H1 (cell line): ENCODE measurements at regions of chr11 and their contacts with region 1.

Region 1: DNA sequence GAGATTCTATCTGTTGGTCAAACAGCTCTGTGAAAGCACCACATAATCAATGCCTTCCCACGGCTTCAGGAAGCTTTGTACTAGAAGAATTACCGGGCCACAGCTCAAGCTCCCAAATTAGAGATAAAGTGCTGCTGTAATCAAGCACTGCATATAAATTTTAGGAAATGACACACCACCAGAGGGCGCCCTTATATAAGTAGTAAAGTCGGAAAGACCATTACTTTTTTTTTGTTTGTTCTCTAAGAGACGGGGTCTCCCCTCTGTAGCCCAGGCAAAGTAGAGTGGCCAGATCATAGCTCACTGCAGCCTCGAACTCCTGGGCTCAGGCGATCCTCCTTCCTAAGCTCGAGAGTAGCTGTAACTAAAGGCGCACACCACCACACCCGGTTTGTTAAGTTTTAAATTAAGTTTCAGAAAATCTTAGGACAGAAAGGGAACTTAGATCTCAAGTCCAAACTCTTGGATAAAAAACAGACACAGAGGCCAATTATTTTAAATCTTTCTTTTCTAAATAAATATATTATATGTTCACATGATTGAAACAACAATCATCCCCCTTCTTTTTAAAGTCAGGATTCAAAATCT is 32.6 kb downstream of the PRCP start:
- DNase-seq: peak; percentile 9 to 83
- H3K4me3 ChIP-seq: no peak overlapping the region
- H3K27ac ChIP-seq: no peak overlapping the region
- H3K4me1 ChIP-seq: peaks cover 0 to 3% (median 0%) of the 10 kb centered on the region in 4 experiments; a peak in 1 of 7 replicates
- H3K27me3 ChIP-seq: no peaks in the 10 kb centered on the region
- CTCF ChIP-seq: peak in 2 of 3 experiments; percentile 58 to 66; a peak in 3 of 4 replicates
- EP300 ChIP-seq: no peak
- POLR2A ChIP-seq: no peak
- RAD21 ChIP-seq: peak; percentile 75 to 84

Region 2: GRCh38 chr11:82653752-82654151 is 213.8 kb before region 1 on chr11:
- CTCF ChIA-PET with region 1: no interaction called
- POLR2A ChIA-PET with region 1: no interaction called
- DNase-seq: no peak
- H3K4me3 ChIP-seq: no peak overlapping the region
- H3K27ac ChIP-seq: no peak overlapping the region
- H3K4me1 ChIP-seq: no peaks in the 10 kb centered on the region
- H3K27me3 ChIP-seq: no peaks in the 10 kb centered on the region
- CTCF ChIP-seq: no peak
- EP300 ChIP-seq: no peak
- POLR2A ChIP-seq: no peak
- RAD21 ChIP-seq: no peak

Region 3: DNA sequence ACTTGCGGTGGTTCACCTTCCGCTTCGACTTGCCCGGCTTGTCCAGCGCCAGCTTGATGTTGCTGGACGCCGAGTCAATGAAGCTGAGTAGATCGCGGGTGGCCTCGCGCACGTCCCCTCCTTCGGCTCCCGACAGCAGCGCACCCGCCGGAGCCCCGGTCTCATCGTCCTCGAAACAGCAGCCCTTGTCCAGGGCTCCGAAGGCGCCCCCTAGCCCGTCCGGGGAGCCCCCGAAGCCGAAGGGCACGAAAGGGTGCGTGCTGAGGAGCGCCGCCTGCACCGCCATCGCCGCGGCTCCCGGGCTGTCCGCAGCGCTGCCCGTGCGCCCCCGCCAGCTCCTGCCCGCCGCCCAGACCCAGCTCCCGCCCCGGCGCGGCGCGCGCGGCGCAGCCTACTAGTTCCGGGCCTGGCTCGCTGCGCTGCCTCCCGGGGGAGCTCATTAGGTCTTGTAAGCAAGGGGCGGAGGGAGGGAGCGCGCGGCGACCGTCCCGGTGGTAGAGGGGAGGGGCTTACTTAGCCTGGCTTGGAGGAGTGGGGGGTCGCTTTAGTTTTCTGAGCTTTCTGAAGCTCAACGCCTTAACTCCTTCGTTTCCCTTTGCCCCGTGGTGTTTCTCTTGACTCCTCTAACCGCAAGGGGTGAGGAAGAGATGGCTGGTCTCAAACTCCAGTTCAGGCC is 134.0 kb before region 1 on chr11 and contains the start of gene FAM181B:
- CTCF ChIA-PET with region 1: interaction called, 12 read pairs
- POLR2A ChIA-PET with region 1: no interaction called
- DNase-seq: peak; percentile 71 to 85
- H3K4me3 ChIP-seq: peak within 1 kb of the TSS; percentile 50 to 86 (median 58)
- H3K27ac ChIP-seq: no peak within 1 kb of the TSS
- H3K4me1 ChIP-seq: peaks cover 2 to 15% (median 6%) of the 10 kb centered on the region in 4 experiments; a peak in 5 of 7 replicates
- H3K27me3 ChIP-seq: peaks cover 11 to 41% (median 36%) of the 10 kb centered on the region in 4 experiments
- CTCF ChIP-seq: no peak
- EP300 ChIP-seq: 0 out of 3 replicates have a peak, but pooled peaks of 1 of the 2 experiments have one; percentile 24
- POLR2A ChIP-seq: no peak
- RAD21 ChIP-seq: no peak
- total RNA-seq, gene FAM181B: 0.37 and 0.42 TPM in 2 replicates

Region 4: DNA sequence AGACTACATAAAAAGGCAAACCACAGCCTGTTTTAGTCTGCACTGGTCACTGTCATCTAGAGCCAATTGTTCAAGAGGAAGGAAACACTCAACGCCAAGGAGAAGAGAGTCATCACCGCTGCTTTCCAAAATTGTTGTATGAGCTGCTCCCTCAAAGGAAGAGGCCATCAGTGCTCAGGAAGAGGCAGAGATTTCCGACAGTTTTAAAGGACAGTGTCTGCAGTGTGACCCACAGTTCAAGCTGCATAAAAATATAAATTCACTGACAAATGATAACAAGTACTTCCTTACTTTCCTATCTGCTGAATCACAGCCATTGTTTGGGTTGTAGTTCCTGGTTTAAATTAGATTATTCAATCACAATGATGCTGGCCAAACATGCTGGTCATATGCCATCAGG is 16.3 kb after region 1 on chr11:
- CTCF ChIA-PET with region 1: interaction called, 11 read pairs
- POLR2A ChIA-PET with region 1: no interaction called
- DNase-seq: no peak
- H3K4me3 ChIP-seq: no peak overlapping the region
- H3K27ac ChIP-seq: no peak overlapping the region
- H3K4me1 ChIP-seq: no peaks in the 10 kb centered on the region
- H3K27me3 ChIP-seq: no peaks in the 10 kb centered on the region
- CTCF ChIP-seq: no peak
- EP300 ChIP-seq: no peak
- POLR2A ChIP-seq: no peak
- RAD21 ChIP-seq: no peak

Region 5: DNA sequence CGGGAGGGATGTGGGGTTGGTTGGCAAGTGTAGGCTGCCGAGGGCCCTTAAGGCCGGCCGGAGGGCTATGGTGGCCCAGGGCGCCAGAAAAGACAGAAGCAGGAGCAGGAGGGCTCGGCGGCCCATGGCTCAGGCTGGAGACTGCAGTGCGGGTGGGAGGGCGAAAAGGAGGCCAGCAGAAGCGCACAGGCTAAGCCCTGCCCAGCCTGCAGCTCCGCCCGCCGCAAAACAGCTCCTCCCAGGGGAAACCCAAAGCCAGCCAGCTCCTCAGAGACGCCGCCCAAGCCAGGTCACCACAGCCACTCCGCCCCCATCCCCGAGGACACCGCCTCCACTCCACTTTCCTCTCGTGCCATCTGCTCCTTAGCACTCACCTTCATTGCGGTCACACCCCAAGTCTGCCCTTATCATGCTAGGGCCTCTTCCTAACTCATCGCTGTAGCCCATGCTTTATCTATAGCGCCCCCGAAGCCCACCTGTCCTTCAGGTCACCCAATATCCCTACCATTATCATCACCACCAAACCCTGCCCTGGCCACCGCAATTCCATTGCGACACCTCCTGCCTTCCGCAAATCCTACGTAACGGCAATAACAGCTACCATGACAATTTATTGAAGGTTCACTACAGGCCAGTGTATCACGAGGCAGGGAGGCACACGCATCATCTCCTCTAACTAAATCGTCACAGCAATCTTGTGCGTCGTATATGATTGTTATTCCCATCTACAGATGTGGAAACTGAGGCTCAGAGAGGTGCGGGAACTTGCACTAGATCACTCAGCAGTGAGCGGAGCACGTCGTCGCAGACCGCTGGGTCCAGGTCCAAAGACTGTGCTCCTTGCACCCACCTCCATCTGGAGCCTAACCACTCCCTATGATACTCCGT is 32.9 kb after region 1 on chr11 and contains the start of gene PRCP:
- CTCF ChIA-PET with region 1: interaction called, 82 read pairs
- POLR2A ChIA-PET with region 1: interaction called, 3 read pairs
- DNase-seq: peak; percentile 78 to 89
- H3K4me3 ChIP-seq: peak within 1 kb of the TSS; percentile 79 to 97 (median 87)
- H3K27ac ChIP-seq: peak within 1 kb of the TSS; percentile 46; the same call in 1 of the 2 replicates
- H3K4me1 ChIP-seq: peaks cover 0 to 7% (median 5%) of the 10 kb centered on the region in 4 experiments; a peak in 5 of 7 replicates
- H3K27me3 ChIP-seq: no peaks in the 10 kb centered on the region
- CTCF ChIP-seq: peak in 1 of 3 experiments; percentile 4; a peak in 2 of 4 replicates
- EP300 ChIP-seq: 0 out of 3 replicates have a peak, but pooled peaks of 1 of the 2 experiments have one; percentile 18
- POLR2A ChIP-seq: peak; percentile 35 to 96
- RAD21 ChIP-seq: no peak
- total RNA-seq, gene PRCP: 62.6 and 63.8 TPM in 2 replicates

Region 6: DNA sequence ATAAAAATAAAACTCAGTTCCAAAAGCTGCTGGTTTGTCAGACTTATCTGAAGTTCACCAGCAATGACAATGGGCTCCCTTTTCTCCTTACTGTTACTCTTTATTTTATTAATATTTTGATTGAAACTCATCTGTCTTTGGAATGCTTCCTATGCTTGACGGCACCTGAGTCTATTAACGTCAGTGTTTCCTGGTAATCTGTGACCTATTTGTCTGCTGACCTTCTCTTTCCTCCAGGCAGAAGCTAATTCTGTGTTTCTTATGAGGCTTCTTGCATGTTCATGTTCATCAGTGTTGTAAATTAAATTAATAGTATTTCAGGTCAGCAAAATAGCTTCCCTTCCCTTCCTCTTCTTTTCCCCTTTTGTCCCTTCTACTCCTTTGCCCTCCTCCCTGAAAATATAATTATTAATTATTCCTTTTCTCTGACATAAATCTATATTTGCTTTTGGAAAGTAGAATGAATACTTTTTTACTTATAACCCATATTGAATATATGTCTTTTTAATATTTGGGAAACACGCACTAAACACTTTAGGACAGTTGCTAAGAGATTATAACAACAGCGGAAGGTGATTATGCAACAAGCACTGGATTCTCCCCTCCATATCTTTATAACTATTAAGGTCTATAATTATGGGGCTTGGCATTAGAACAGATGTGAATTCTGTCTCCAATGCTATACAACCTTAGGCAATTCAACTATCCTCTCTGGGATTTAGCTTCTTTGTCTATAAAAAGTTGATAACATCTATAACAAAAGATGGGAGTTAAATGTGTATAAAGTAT is 257.2 kb after region 1 on chr11:
- CTCF ChIA-PET with region 1: no interaction called
- POLR2A ChIA-PET with region 1: no interaction called
- DNase-seq: no peak
- H3K4me3 ChIP-seq: no peak overlapping the region
- H3K27ac ChIP-seq: no peak overlapping the region
- H3K4me1 ChIP-seq: no peaks in the 10 kb centered on the region
- H3K27me3 ChIP-seq: no peaks in the 10 kb centered on the region
- CTCF ChIP-seq: no peak
- EP300 ChIP-seq: no peak
- POLR2A ChIP-seq: no peak
- RAD21 ChIP-seq: no peak